ENCODE measurements at regions of chr16 and their contacts with region 1.

Region 1: DNA sequence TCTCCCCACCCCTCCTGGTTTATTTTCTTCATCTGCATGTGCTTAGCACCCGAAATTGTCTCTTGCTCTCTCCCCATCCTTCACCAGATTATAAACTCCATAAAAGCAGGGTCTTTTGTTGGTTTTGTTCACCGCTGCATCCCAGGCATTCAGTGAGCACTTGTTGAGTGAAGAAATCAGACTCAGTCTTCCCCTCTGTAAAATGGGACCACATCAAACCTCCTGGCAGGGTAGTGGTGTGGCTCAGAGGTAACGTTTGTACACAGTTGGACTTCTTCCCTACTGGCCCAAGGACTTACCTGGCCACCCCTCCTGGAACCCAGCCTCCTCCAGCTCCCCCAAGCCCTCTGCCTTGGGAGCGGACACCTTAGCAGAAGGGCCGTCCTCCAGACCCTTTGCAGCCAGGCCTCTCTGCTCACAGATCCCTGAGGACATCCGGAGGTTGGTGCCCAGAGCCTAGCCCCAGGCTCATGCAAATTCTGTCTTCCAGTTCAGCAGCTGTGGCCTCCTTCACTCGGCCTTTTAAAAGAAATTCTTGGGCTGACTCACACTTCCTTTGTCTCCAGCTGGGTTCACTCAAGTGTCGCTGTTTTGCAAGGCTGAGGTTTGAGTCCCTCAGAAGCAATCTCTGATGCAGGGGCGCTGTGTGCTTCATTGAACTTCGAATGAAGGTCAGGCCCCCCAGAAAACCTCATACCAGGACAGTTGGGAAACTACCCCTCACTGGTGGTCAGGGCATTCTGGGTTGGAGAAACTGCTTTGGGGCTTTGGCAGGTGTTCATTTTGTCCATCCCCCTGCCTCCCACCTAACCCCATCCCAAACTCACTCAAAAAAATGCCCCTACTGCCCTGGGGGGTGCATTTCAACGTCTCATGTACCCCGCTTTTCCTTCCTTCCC is 16.8 kb upstream of the RMI2 start:
- DNase-seq: peak; percentile 84

Region 2: GRCh38 chr16:11263737-11264136 is 64.7 kb before region 1 on chr16:
- intact Hi-C with region 1: loop called in 1 of 2 experiments (anchors 5 kb)
- DNase-seq: no peak